Activated CD4-positive, alpha-beta T cell treated with anti-CD3 and anti-CD28 coated beads, Interleukin-2, amount 10 ng/mL, durations not matched to agents 24 days and 14 days (primary cell): ENCODE measurements at regions of chr7 and their contacts with region 1.

Region 1: DNA sequence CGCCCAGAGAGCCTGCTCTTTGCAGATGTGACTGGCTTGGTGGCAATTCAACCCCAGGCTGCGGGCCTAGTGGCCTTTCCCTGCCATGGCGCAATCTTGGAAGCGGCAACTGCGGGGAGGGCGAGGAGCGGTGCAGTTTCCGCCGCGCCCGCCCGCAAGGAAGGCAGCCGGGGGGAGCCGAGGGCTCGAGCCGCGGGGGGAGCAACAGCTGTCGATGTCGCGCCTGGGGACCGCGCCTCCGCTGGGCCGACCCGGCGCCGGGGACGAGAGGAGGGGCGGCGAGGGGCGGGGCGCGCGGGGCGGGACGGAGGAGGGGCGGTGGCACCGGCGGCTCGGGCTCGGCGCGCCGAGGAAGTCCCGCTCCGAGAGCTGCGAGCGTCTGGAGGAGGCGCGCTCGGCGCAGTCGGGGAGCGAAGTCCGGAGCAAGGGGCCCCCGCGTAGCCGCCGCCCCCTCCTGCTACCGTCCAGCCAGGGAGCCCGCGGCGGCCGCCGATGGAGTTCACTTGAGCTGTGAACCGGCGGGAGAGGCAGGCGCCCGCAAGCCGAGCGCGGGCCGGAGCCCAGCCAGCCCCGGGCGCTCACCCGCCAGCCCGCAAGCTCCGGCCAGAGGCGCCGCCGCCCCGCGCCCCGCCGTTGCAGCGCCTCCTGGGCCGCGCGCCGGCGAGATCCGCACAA is 438.1 kb upstream of the GALNT17 start:
- DNase-seq: peak; percentile 73
- H3K4me3 Mint-ChIP-seq: peak overlapping the region; percentile 55
- H3K27ac Mint-ChIP-seq: no peak overlapping the region
- H3K4me1 Mint-ChIP-seq: peaks cover 4% of the 10 kb centered on the region
- H3K27me3 Mint-ChIP-seq: peaks cover 53% of the 10 kb centered on the region

Region 2: DNA sequence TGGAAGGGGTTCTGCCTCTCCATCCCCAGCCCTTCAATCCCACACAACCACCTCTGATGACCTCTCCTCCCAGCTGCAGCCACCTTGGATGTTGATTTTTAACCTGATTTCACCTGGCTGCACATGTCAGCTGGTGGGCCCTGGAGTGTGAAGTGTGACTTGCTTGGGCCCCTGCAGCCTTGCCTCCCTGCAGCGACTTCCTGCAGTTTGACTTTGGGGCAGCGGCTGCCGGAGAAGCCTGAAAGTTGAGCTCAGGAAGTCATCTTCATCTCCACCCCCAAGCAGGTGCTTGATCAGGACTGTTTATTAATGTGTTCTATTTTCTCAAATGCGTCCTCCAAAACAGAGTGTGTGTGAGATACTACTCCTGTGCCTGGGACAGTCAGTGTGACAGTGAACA is 237.1 kb before region 1 on chr7:
- intact Hi-C with region 1: loop called (anchors 10 kb)
- DNase-seq: peak; percentile 55
- H3K4me3 Mint-ChIP-seq: no peak overlapping the region
- H3K27ac Mint-ChIP-seq: no peak overlapping the region
- H3K4me1 Mint-ChIP-seq: peaks cover 1% of the 10 kb centered on the region
- H3K27me3 Mint-ChIP-seq: no peaks in the 10 kb centered on the region

Region 3: DNA sequence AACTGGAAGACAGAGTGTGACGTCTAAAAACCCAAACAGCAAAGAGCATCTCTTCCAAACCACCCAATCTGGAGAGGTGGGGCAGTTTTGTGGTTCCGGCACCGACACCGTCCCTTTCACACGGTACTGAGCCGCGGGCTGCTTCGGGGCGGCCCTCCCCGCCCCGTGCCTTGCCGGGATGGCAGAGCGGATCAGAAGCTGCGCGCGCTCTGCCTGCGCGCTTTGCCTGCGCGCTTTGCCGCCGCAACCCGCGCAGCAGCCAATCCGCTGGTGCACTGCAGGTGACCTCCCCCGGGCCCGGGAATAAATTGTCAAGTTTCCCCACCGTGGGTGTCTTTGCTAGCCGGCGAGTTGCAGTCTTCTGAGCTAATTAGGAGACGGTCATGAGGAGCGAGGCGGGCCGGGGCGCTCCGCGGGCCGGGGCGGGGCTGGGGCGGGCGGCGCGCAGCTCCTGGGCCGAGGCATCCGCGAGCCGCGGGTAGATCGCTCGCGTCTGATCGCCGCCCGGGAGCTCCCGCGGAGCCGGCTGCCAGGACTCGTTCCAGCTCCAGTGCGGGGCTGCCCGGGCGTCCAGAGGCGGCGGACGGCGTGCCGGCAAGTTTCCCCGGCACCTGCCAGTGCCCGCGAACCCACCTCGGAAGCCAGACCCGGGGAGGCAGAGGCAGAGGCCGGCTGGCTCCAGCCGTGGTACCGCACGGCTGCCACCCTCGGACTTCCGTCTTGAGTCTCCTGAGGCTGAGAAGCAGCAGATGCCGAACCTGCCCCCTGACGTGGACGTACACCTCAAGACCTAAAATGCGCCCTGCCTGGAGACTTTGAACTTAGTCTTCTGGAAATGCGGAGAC is 97.8 kb before region 1 on chr7:
- intact Hi-C with region 1: loop called (anchors 10 kb)
- DNase-seq: no peak
- H3K4me3 Mint-ChIP-seq: no peak overlapping the region
- H3K27ac Mint-ChIP-seq: no peak overlapping the region
- H3K4me1 Mint-ChIP-seq: no peaks in the 10 kb centered on the region
- H3K27me3 Mint-ChIP-seq: peaks cover 40% of the 10 kb centered on the region

Region 4: GRCh38 chr7:70668606-70669358 is 25.0 kb before region 1 on chr7:
- intact Hi-C with region 1: no loop called
- DNase-seq: no peak
- H3K4me3 Mint-ChIP-seq: no peak overlapping the region
- H3K27ac Mint-ChIP-seq: no peak overlapping the region
- H3K4me1 Mint-ChIP-seq: no peaks in the 10 kb centered on the region
- H3K27me3 Mint-ChIP-seq: peaks cover 7% of the 10 kb centered on the region